ENCODE measurements at regions of chr16 and their contacts with region 1.

Region 1: GRCh38 chr16:50665128-50665878 is 15.8 kb downstream of the SNX20 start:
- H3K4me3 Mint-ChIP-seq: peak overlapping the region; percentile 81
- H3K27ac Mint-ChIP-seq: peak overlapping the region; percentile 89
- H3K4me1 Mint-ChIP-seq: peaks cover 41% of the 10 kb centered on the region
- H3K27me3 Mint-ChIP-seq: no peaks in the 10 kb centered on the region

Region 2: GRCh38 chr16:50210266-50211038 is 454.9 kb before region 1 on chr16:
- intact Hi-C with region 1: loop called (anchors 5 kb)
- H3K4me3 Mint-ChIP-seq: no peak overlapping the region
- H3K27ac Mint-ChIP-seq: peak overlapping the region; percentile 71
- H3K4me1 Mint-ChIP-seq: peaks cover 35% of the 10 kb centered on the region
- H3K27me3 Mint-ChIP-seq: no peaks in the 10 kb centered on the region

Region 3: GRCh38 chr16:50537533-50538290 is 127.6 kb before region 1 on chr16:
- intact Hi-C with region 1: no loop called
- H3K4me3 Mint-ChIP-seq: no peak overlapping the region
- H3K27ac Mint-ChIP-seq: no peak overlapping the region
- H3K4me1 Mint-ChIP-seq: no peaks in the 10 kb centered on the region
- H3K27me3 Mint-ChIP-seq: peaks cover 13% of the 10 kb centered on the region

Region 4: GRCh38 chr16:50548125-50548908 is 117.0 kb before region 1 on chr16 and contains the start of gene NKD1:
- intact Hi-C with region 1: loop called (anchors 5 kb)
- H3K4me3 Mint-ChIP-seq: peak within 1 kb of the TSS; percentile 73
- H3K27ac Mint-ChIP-seq: peak within 1 kb of the TSS; percentile 48
- H3K4me1 Mint-ChIP-seq: peaks cover 13% of the 10 kb centered on the region
- H3K27me3 Mint-ChIP-seq: peaks cover 75% of the 10 kb centered on the region

Region 5: DNA sequence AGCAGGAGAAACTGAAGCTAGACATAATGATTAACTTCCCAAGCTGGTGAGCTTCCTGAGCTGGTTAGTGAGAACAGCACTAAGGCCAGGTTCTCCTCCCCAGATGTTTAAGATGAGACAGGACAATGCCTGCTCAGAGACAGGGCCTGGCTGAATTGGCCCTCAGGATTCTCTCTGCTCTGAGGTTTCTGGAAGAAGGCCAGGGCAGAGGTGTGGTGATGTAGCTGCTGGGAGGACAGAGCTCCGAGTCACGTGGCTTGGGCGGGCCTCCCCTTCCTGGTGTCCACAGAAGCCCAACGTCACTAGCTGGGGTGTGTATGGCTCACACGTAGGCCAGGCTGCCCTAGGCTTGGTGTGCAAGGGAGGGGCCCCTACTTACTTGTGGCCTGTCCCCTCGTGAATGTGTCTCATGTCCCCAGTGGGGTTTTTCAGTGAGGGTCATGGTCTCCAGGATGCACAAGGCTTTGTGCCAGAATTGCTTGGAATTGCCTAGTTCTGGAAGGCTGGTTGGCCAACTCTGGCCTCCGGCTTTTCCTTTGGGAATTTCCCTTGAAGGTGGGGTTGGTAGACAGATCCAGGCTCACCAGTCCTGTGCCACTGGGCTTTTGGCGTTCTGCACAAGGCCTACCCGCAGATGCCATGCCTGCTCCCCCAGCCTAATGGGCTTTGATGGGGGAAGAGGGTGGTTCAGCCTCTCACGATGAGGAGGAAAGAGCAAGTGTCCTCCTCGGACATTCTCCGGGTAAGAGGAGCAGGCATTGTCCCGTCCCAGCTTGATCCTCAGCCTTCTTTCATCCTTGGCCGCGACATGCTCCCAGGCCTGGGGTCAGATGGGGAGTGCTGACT is 31.5 kb after region 1 on chr16:
- intact Hi-C with region 1: no loop called
- H3K4me3 Mint-ChIP-seq: peak overlapping the region; percentile 91
- H3K27ac Mint-ChIP-seq: peak overlapping the region; percentile 91
- H3K4me1 Mint-ChIP-seq: peaks cover 90% of the 10 kb centered on the region
- H3K27me3 Mint-ChIP-seq: no peaks in the 10 kb centered on the region

Region 6: DNA sequence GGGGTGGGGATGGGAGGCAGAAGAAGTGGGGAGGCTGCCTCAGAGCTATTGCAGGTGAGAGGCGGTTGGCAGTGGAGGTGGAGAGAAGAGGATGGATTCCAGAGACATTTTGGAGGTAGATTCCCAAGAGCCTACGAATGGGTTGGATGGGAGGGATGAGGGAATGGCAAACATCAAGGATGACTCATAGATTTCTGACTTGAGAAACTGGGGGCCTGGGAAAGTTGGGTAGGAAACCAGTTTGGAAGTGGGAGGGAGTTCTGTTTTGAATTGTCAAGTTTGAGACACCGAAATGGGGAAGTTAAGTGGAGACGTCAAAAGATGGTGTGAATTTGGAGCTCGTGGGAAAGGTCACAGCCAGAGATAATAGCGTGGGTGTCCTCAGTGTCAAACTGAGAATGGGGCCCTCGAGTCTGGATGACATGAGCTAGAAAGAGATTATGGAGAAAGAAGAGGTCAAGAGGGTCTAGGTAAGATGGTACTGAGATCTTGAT is 70.4 kb after region 1 on chr16:
- intact Hi-C with region 1: no loop called
- H3K4me3 Mint-ChIP-seq: no peak overlapping the region
- H3K27ac Mint-ChIP-seq: peak overlapping the region; percentile 31
- H3K4me1 Mint-ChIP-seq: peaks cover 67% of the 10 kb centered on the region
- H3K27me3 Mint-ChIP-seq: no peaks in the 10 kb centered on the region

Measured in dendritic cell treated with granulocyte-macrophage colony-stimulating factor and Interleukin-4, amounts not matched to agents 40 ng/mL and 50 ng/mL, for 4 days (primary cell).